PC-9 (cell line): ENCODE measurements at regions of chr4 and their contacts with region 1.

Region 1: DNA sequence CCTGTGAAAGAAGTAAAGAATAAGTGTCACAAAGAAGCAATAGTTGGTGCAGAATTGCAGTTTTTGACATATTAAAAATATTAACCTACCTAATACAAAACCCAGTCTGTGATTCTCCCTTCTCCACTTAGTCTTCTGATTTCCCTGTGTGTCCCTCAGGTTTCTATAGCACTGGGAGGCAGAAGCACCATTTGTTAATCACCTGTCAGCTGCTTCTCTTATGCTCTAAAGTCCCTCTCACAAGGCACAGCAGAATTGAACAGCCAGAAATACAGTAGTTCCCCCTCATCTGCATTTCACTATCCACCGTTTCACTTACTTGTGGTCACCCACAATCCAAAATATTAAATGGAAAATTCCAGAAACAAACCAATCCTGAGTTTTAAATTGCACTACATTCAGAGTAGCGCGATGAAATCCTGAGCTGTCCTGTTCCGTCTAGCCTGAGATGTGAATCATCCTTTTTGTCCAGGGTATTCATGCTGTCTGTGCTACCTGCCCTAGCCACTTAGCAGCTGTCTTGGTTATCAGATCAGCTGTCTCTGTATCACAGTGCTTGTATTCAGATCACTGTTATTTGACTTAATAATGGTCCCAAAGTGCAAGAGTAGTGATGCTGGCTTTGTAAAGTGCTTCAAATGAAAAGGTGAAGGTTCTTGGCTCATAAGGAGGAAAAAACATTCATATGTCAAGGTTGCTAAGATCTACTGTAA is 984.1 kb upstream of the GRID2 start:
- DNase-seq: no peak
- H3K4me3 ChIP-seq: no peak overlapping the region
- H3K27ac ChIP-seq: no peak overlapping the region
- H3K4me1 ChIP-seq: no peaks in the 10 kb centered on the region
- H3K27me3 ChIP-seq: no peaks in the 10 kb centered on the region
- CTCF ChIP-seq: no peak

Region 2: DNA sequence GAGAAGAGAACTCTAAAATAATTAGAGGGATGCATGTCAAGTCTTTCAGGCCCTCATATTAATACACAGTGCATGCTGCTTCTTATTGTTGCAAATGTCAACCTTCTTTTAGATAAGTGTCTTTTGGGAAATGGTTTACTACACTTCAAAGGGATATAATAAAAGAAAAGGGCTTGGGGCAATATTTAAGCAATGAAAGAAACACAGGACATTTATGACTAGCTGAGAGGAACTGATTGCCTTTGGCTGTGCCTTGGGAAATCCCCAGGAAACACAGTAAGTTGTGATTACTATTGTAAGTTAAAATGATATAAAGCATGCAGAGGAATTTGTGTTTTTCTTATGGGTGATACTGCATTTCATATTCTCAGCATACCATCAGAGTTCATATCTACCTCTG is 52.2 kb before region 1 on chr4:
- CTCF ChIA-PET with region 1: no interaction called
- POLR2A ChIA-PET with region 1: no interaction called
- intact Hi-C with region 1: no loop called
- DNase-seq: no peak
- H3K4me3 ChIP-seq: no peak overlapping the region
- H3K27ac ChIP-seq: no peak overlapping the region
- H3K4me1 ChIP-seq: no peaks in the 10 kb centered on the region
- H3K27me3 ChIP-seq: no peaks in the 10 kb centered on the region
- CTCF ChIP-seq: no peak

Region 3: DNA sequence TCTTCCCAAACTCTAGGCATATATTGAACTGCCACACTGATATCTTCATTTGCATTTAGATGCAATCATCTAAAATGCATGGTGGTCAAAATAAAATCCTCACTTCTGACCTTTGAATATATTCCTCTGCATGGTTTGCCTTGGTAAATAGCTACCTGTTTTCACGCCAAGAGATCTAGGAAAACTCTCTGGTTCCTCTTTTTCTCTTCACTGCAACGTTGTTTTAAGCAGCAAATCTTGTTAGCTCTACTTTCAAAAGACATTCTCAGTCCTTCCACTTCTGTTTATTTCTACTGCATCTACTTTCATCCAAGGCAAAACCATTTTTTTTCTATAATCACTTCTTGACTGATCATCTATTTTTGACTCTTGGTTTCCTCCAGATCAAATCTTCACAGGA is 17.6 kb before region 1 on chr4:
- CTCF ChIA-PET with region 1: no interaction called
- POLR2A ChIA-PET with region 1: no interaction called
- intact Hi-C with region 1: loop called (anchors 1 kb)
- DNase-seq: no peak
- H3K4me3 ChIP-seq: no peak overlapping the region
- H3K27ac ChIP-seq: no peak overlapping the region
- H3K4me1 ChIP-seq: no peaks in the 10 kb centered on the region
- H3K27me3 ChIP-seq: no peaks in the 10 kb centered on the region
- CTCF ChIP-seq: no peak

Region 4: GRCh38 chr4:91330555-91331137 is 10.9 kb after region 1 on chr4:
- CTCF ChIA-PET with region 1: no interaction called
- POLR2A ChIA-PET with region 1: no interaction called
- intact Hi-C with region 1: no loop called
- DNase-seq: no peak
- H3K4me3 ChIP-seq: no peak overlapping the region
- H3K27ac ChIP-seq: no peak overlapping the region
- H3K4me1 ChIP-seq: no peaks in the 10 kb centered on the region
- H3K27me3 ChIP-seq: no peaks in the 10 kb centered on the region
- CTCF ChIP-seq: no peak

Region 5: DNA sequence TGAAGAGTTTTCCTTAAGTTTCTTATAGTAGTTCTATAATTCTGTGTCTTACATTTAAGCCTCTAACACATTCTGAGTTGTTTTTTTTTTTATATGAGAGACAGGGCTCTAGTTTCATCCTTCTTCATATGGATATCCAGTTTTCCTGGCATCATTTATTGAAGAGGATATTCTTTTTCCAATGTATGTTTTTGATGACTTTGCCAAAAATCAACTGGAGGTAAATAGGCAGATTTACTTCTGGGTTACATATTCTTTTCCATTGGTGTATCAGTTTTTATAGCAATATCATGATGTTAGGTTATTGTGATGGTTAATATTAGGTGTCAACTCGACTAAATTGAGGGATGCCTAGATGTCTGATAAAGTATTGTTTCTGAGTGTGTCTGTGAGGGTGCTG is 333.4 kb after region 1 on chr4:
- CTCF ChIA-PET with region 1: no interaction called
- POLR2A ChIA-PET with region 1: no interaction called
- intact Hi-C with region 1: no loop called
- DNase-seq: no peak
- H3K4me3 ChIP-seq: no peak overlapping the region
- H3K27ac ChIP-seq: no peak overlapping the region
- H3K4me1 ChIP-seq: no peaks in the 10 kb centered on the region
- H3K27me3 ChIP-seq: no peaks in the 10 kb centered on the region
- CTCF ChIP-seq: no peak